CD4-positive, alpha-beta memory T cell (primary cell): ENCODE measurements at regions of chr18 and their contacts with region 1.

Region 1: DNA sequence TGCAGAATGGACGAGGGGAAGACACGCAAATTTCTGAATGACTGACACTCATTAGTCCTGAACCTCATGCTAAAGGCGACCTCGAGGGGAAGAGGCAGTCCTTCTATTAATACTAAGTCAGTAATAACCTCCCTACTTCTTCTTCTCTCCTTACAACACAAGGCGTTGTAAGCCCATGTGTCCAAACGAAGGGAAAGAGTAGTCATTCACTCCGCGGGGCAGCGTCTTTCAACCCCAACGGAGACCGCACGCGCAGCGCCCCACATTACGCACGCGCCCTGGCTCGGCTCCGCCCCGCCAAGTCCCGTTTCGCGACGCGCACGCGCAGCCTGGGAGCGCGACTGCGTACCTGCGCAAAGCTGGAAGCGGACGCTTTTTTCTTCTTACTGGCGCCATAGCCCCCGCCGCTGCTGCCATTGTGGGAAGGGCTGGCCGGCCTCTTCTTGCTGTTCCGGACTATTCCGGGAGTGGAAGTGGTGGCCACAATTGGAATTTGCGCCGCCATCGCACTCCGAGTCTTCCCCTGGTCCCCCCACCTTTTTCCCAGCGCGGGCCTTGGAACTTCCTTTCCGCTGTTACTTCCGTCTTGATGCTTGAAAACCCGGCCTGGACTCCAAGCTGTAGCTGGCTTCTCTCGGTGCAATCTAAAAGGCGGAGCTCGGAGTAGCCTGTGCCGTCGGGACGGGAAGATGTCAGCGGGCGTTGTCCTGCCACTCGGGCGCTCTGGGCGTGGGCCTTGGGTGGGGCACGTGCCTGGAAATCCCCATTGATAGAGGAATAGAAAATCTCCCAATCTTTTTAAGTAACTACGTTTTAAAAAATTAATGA is at the start of gene INO80C:
- DNase-seq: peak; percentile 92 to 94 (median 93)
- H3K4me3 ChIP-seq: peak within 1 kb of the TSS; percentile 94 to 96
- H3K4me3 Mint-ChIP-seq: peak within 1 kb of the TSS; percentile 95 to 99 (median 96)
- H3K27ac ChIP-seq: peak within 1 kb of the TSS; percentile 84
- H3K27ac Mint-ChIP-seq: peak within 1 kb of the TSS; percentile 98 to 100 (median 100)
- H3K4me1 ChIP-seq: peaks cover 23% of the 10 kb centered on the region
- H3K4me1 Mint-ChIP-seq: peaks cover 14 to 39% (median 28%) of the 10 kb centered on the region in 4 donors
- H3K27me3 ChIP-seq: no peaks in the 10 kb centered on the region
- H3K27me3 Mint-ChIP-seq: no peaks in the 10 kb centered on the region
- total RNA-seq, gene INO80C: 27.3 to 30.3 TPM

Region 2: DNA sequence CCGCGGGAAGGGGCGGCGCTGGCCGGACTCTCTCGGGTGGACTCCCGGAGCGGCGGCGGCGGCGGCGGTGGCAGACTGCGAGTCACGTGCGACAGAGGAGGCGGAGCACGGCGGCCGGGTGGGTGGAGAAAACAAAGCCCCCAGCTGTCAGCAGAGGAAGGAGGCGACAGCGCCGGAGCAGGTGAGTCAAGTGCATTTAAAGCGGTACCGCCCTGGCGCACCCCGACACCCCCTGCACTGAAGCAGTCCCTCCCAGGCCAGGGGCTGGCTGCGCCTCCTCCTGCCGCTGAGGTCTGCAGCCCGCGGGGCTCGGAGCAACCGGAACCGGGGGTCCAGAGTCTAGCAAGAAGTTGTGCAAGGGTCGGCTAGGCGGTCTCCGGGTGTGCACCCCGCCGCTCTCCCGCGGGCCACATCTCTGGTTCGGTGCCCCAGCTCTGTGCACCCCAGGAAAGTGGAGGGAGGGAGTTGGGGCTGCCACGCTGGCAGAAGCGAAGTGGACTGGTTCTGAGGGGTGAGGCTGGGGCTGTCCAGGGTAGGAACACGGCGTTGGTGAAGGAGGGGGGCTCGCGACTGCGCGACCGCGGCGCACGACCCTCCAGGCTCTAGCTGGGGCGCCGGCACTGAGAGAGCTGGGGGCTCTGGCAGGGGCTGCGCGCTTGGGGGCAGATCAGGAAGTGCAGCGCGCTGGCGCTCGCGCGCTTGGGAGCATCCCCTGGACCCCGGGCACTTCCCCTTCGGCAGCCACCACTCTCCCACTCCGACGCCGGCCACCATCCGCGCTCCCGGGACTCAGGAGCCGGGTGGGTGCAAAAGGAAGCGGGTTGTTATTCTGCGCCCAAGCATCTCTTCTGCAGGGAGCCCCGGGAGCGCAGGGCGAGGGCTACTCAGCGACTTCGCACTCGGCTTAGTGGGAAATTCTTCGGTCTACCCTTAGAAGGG is 520.4 kb before region 1 on chr18:
- CTCF ChIA-PET with region 1: no interaction called
- POLR2A ChIA-PET with region 1: interaction called, 3 read pairs
- intact Hi-C with region 1: loop called (anchors 5 kb)
- DNase-seq: peak; percentile 58 to 81 (median 66)
- H3K4me3 ChIP-seq: peak overlapping the region; percentile 60 to 82
- H3K4me3 Mint-ChIP-seq: peak overlapping the region; percentile 90 to 97 (median 94)
- H3K27ac ChIP-seq: no peak overlapping the region
- H3K27ac Mint-ChIP-seq: peak overlapping the region in 4 of 7 donors; percentile 83 to 90 (median 88)
- H3K4me1 ChIP-seq: peaks cover 14% of the 10 kb centered on the region
- H3K4me1 Mint-ChIP-seq: peaks cover 15 to 30% (median 19%) of the 10 kb centered on the region in 4 donors
- H3K27me3 ChIP-seq: peaks cover 9% of the 10 kb centered on the region
- H3K27me3 Mint-ChIP-seq: peaks cover 10 to 12% of the 10 kb centered on the region in 2 donors

Region 3: GRCh38 chr18:35290073-35290735 is 207.4 kb before region 1 on chr18 and contains the start of gene ZSCAN30:
- CTCF ChIA-PET with region 1: no interaction called
- POLR2A ChIA-PET with region 1: interaction called, 17 read pairs
- intact Hi-C with region 1: loop called (anchors 1 kb)
- DNase-seq: peak; percentile 94 to 96 (median 95)
- H3K4me3 ChIP-seq: peak within 1 kb of the TSS; percentile 84 to 89
- H3K4me3 Mint-ChIP-seq: peak within 1 kb of the TSS; percentile 96 to 100 (median 98)
- H3K27ac ChIP-seq: peak within 1 kb of the TSS; percentile 84
- H3K27ac Mint-ChIP-seq: peak within 1 kb of the TSS; percentile 98 to 100 (median 99)
- H3K4me1 ChIP-seq: peaks cover 36% of the 10 kb centered on the region
- H3K4me1 Mint-ChIP-seq: peaks cover 36 to 60% (median 46%) of the 10 kb centered on the region in 4 donors
- H3K27me3 ChIP-seq: no peaks in the 10 kb centered on the region
- H3K27me3 Mint-ChIP-seq: no peaks in the 10 kb centered on the region
- total RNA-seq, gene ZSCAN30: 16.9 to 18.4 TPM

Region 4: GRCh38 chr18:35407871-35408481 is 89.6 kb before region 1 on chr18:
- CTCF ChIA-PET with region 1: no interaction called
- POLR2A ChIA-PET with region 1: interaction called, 3 read pairs
- intact Hi-C with region 1: loop called (anchors 2 kb)
- DNase-seq: peak in 4 of 5 donors; percentile 48 to 66 (median 60)
- H3K4me3 ChIP-seq: no peak overlapping the region
- H3K4me3 Mint-ChIP-seq: no peak overlapping the region
- H3K27ac ChIP-seq: no peak overlapping the region
- H3K27ac Mint-ChIP-seq: no peak overlapping the region
- H3K4me1 ChIP-seq: peaks cover 4% of the 10 kb centered on the region
- H3K4me1 Mint-ChIP-seq: peaks cover 0 to 10% (median 9%) of the 10 kb centered on the region in 4 donors
- H3K27me3 ChIP-seq: no peaks in the 10 kb centered on the region
- H3K27me3 Mint-ChIP-seq: peaks cover 2 to 4% of the 10 kb centered on the region in 2 donors

Region 5: GRCh38 chr18:35513181-35513936 is 15.8 kb after region 1 on chr18:
- CTCF ChIA-PET with region 1: no interaction called
- POLR2A ChIA-PET with region 1: no interaction called
- intact Hi-C with region 1: no loop called
- DNase-seq: no peak
- H3K4me3 ChIP-seq: no peak overlapping the region
- H3K4me3 Mint-ChIP-seq: no peak overlapping the region
- H3K27ac ChIP-seq: no peak overlapping the region
- H3K27ac Mint-ChIP-seq: no peak overlapping the region
- H3K4me1 ChIP-seq: no peaks in the 10 kb centered on the region
- H3K4me1 Mint-ChIP-seq: peaks cover 0 to 2% (median 0%) of the 10 kb centered on the region in 4 donors
- H3K27me3 ChIP-seq: no peaks in the 10 kb centered on the region
- H3K27me3 Mint-ChIP-seq: peaks cover 0 to 2% of the 10 kb centered on the region in 2 donors

Region 6: GRCh38 chr18:35616664-35617423 is 119.3 kb after region 1 on chr18:
- CTCF ChIA-PET with region 1: interaction called, 3 read pairs
- POLR2A ChIA-PET with region 1: interaction called, 4 read pairs
- intact Hi-C with region 1: loop called (anchors 1 kb)
- DNase-seq: peak; percentile 49 to 80 (median 57)
- H3K4me3 ChIP-seq: no peak overlapping the region
- H3K4me3 Mint-ChIP-seq: no peak overlapping the region
- H3K27ac ChIP-seq: no peak overlapping the region
- H3K27ac Mint-ChIP-seq: no peak overlapping the region
- H3K4me1 ChIP-seq: peaks cover 24% of the 10 kb centered on the region
- H3K4me1 Mint-ChIP-seq: peaks cover 8 to 16% (median 13%) of the 10 kb centered on the region in 4 donors
- H3K27me3 ChIP-seq: no peaks in the 10 kb centered on the region
- H3K27me3 Mint-ChIP-seq: no peaks in the 10 kb centered on the region

Region 7: DNA sequence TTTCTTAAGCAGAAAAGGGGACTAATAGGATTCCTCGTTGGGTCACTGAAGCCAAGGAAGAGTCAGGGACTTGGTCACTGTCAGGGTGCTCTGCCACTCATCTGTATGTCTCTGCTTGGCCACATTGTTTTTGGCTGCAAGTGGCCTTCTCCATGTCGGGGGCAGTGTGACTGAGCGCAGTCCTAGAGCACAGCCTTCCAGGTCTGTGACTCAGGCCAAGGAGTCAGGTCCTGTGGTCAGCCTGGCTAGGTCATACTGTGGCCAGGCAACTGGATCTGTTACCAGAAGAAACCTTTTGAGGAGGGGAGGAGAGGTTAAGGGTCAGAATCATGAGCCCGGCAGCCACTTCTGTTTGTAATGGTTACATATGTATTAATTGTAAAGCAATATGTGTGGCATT is 145.2 kb after region 1 on chr18:
- CTCF ChIA-PET with region 1: no interaction called
- POLR2A ChIA-PET with region 1: no interaction called
- intact Hi-C with region 1: no loop called
- DNase-seq: no peak
- H3K4me3 ChIP-seq: no peak overlapping the region
- H3K4me3 Mint-ChIP-seq: no peak overlapping the region
- H3K27ac ChIP-seq: no peak overlapping the region
- H3K27ac Mint-ChIP-seq: no peak overlapping the region
- H3K4me1 ChIP-seq: no peaks in the 10 kb centered on the region
- H3K4me1 Mint-ChIP-seq: peaks cover 0 to 9% (median 3%) of the 10 kb centered on the region in 4 donors
- H3K27me3 ChIP-seq: no peaks in the 10 kb centered on the region
- H3K27me3 Mint-ChIP-seq: no peaks in the 10 kb centered on the region